ENCODE measurements at regions of chrX and their contacts with region 1.

Region 1: DNA sequence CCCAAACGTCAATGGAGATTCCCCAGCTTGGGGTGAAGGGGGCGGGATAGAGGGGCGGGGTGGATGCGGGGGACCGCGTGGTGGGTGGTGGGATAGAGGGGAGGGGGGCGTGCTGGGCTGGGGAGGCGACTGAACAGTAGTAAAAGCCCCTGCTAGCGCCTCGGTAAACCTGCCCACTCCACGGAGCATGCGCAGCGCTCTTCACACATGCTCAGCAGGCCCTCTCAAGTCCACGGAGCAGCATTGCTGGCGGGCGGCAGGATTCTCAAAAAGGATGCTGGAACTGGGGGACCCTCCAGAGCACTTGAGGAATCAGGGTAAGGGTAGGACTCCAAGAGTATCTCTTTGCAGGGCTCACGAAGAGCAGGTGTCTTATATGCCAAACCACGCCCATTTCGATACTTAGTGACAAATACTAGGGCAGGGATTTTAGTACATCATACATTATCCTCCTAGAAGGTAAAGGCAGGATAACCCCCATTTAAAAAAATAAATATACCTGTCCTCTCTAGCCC is 378 bp upstream of the RPS6KA6 start:
- DNase-seq: peak in 1 of 2 experiments; percentile 37
- H3K4me3 ChIP-seq: peak overlapping the region; percentile 78
- H3K27ac ChIP-seq: no peak overlapping the region
- H3K4me1 ChIP-seq: peaks cover 9% of the 10 kb centered on the region; the same call in 1 of the 2 replicates
- H3K27me3 ChIP-seq: no peaks in the 10 kb centered on the region
- CTCF ChIP-seq: no peak

Region 2: DNA sequence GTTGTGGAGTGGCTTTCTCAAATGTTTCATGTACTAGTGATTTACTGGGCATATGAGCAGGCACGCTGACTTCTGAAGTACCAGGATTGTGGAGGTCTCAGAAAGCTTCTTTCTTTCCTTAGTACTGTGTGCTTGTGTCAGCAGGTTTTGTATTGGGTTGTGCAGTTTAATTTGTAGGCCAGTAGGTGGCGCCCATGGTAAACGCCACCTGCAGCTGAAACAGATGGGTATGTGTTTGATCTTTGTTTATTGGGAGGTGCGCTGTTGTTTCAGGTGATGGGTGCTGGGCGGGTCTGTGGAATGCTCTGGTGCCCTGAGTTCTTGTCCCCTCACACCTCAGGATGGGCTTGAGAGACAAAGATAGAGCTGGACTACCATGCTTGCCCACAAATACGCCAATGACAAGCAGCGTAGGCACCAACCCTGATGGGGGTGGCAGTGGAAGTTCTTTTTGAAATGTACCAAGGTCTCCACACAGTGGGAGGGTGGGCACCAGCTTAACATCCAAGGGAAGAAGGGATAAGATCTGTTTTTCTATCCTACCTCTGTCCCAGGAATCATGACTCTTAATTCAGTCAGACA is 141.9 kb before region 1 on chrX:
- CTCF ChIA-PET with region 1: interaction called, 6 read pairs
- POLR2A ChIA-PET with region 1: no interaction called
- intact Hi-C with region 1: loop called (anchors 5 kb)
- DNase-seq: no peak
- H3K4me3 ChIP-seq: no peak overlapping the region
- H3K27ac ChIP-seq: no peak overlapping the region
- H3K4me1 ChIP-seq: no peaks in the 10 kb centered on the region
- H3K27me3 ChIP-seq: no peaks in the 10 kb centered on the region
- CTCF ChIP-seq: peak; percentile 88

Region 3: GRCh38 chrX:84064814-84065213 is 123.6 kb before region 1 on chrX:
- CTCF ChIA-PET with region 1: no interaction called
- POLR2A ChIA-PET with region 1: no interaction called
- intact Hi-C with region 1: no loop called
- DNase-seq: no peak
- H3K4me3 ChIP-seq: no peak overlapping the region
- H3K27ac ChIP-seq: no peak overlapping the region
- H3K4me1 ChIP-seq: no peaks in the 10 kb centered on the region
- H3K27me3 ChIP-seq: no peaks in the 10 kb centered on the region
- CTCF ChIP-seq: no peak

Region 4: GRCh38 chrX:84118761-84119160 is 69.6 kb before region 1 on chrX:
- CTCF ChIA-PET with region 1: no interaction called
- POLR2A ChIA-PET with region 1: no interaction called
- intact Hi-C with region 1: loop called (anchors 10 kb)
- DNase-seq: peak in 1 of 2 experiments; percentile 76
- H3K4me3 ChIP-seq: peak overlapping the region; percentile 41; the same call in 1 of the 2 replicates
- H3K27ac ChIP-seq: peak overlapping the region; percentile 70
- H3K4me1 ChIP-seq: peaks cover 26% of the 10 kb centered on the region
- H3K27me3 ChIP-seq: no peaks in the 10 kb centered on the region
- CTCF ChIP-seq: no peak

Measured in PC-9 (cell line).